GM12878 (cell line): ENCODE measurements at regions of chr7 and their contacts with region 1.

Region 1: DNA sequence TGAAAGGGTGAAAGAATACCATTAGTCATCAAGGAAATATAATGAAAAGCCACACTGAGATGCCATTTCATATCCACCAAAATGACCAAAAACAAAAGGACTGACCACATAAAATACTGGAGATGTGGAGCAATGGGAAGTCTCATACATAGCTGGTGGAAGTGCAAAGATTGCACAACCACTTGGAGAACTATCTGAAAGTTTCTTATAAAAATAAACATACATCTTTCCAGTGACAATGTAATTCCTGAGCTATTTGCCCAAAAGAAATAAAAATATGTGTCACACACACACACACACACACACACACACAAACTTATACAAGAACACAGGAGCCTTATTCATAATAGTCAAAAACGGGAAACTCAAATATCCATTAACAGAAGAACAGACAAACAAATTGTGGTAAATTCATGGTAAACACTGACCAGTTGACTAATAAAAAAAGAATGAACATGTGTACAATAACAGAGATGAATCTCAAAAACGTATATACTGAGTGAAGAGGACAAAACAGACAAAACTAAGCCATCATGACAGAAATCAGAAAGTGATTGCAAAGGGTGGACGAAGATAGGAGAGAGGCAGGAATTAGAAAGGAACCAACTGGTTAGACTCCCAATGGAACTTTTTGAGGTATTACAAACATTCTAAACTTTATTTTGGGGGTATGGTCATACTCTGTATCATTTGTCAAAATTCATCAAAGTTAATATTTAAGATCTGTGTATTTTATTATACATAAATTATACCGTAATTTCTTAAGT is 21.5 kb downstream of the WASL start:
- DNase-seq: no peak
- ATAC-seq: peak; percentile 14; the same call in 2 of the 3 replicates
- H3K4me3 ChIP-seq: no peak overlapping the region
- H3K27ac ChIP-seq: no peak overlapping the region
- H3K4me1 ChIP-seq: peaks cover 12% of the 10 kb centered on the region; the same call in 1 of the 2 replicates
- H3K27me3 ChIP-seq: no peaks in the 10 kb centered on the region
- CTCF ChIP-seq: no peak
- EP300 ChIP-seq: no peak
- POLR2A ChIP-seq: no peak
- RAD21 ChIP-seq: no peak

Region 2: GRCh38 chr7:123738356-123738755 is 11.1 kb after region 1 on chr7:
- CTCF ChIA-PET with region 1: interaction called, 6 read pairs
- POLR2A ChIA-PET with region 1: interaction called, 4 read pairs
- RAD21 ChIA-PET with region 1: interaction called, 3 read pairs
- SMC1A ChIA-PET with region 1: interaction called, 19 read pairs
- in situ Hi-C with region 1: no loop called
- intact Hi-C with region 1: loop called (anchors 2 kb)
- DNase-seq: no peak
- ATAC-seq: no peak
- H3K4me3 ChIP-seq: no peak overlapping the region
- H3K27ac ChIP-seq: no peak overlapping the region
- H3K4me1 ChIP-seq: no peaks in the 10 kb centered on the region
- H3K27me3 ChIP-seq: no peaks in the 10 kb centered on the region
- CTCF ChIP-seq: no peak
- EP300 ChIP-seq: no peak
- POLR2A ChIP-seq: no peak
- RAD21 ChIP-seq: no peak

Region 3: GRCh38 chr7:124042816-124043215 is 315.6 kb after region 1 on chr7:
- CTCF ChIA-PET with region 1: no interaction called
- POLR2A ChIA-PET with region 1: no interaction called
- RAD21 ChIA-PET with region 1: no interaction called
- SMC1A ChIA-PET with region 1: no interaction called
- in situ Hi-C with region 1: no loop called
- intact Hi-C with region 1: no loop called
- DNase-seq: no peak
- ATAC-seq: no peak
- H3K4me3 ChIP-seq: no peak overlapping the region
- H3K27ac ChIP-seq: no peak overlapping the region
- H3K4me1 ChIP-seq: no peaks in the 10 kb centered on the region
- H3K27me3 ChIP-seq: no peaks in the 10 kb centered on the region
- CTCF ChIP-seq: no peak
- EP300 ChIP-seq: no peak
- POLR2A ChIP-seq: no peak
- RAD21 ChIP-seq: no peak

Region 4: GRCh38 chr7:124308384-124308783 is 581.1 kb after region 1 on chr7:
- CTCF ChIA-PET with region 1: no interaction called
- POLR2A ChIA-PET with region 1: no interaction called
- RAD21 ChIA-PET with region 1: no interaction called
- SMC1A ChIA-PET with region 1: no interaction called
- in situ Hi-C with region 1: no loop called
- intact Hi-C with region 1: no loop called
- DNase-seq: no peak
- ATAC-seq: no peak
- H3K4me3 ChIP-seq: no peak overlapping the region
- H3K27ac ChIP-seq: no peak overlapping the region
- H3K4me1 ChIP-seq: no peaks in the 10 kb centered on the region
- H3K27me3 ChIP-seq: no peaks in the 10 kb centered on the region
- CTCF ChIP-seq: no peak
- EP300 ChIP-seq: no peak
- POLR2A ChIP-seq: no peak
- RAD21 ChIP-seq: no peak